Sciatic nerve (tissue), 2 donors: ENCODE measurements at regions of chr3 and their contacts with region 1.

Region 1: GRCh38 chr3:18149386-18149785 is 275.8 kb downstream of the SATB1 start:
- DNase-seq: no peak
- ATAC-seq: no peak

Region 2: GRCh38 chr3:16834212-16834611 is 1315.2 kb before region 1 on chr3:
- intact Hi-C with region 1: loop called (anchors 5 kb)
- DNase-seq: no peak
- ATAC-seq: no peak

Region 3: DNA sequence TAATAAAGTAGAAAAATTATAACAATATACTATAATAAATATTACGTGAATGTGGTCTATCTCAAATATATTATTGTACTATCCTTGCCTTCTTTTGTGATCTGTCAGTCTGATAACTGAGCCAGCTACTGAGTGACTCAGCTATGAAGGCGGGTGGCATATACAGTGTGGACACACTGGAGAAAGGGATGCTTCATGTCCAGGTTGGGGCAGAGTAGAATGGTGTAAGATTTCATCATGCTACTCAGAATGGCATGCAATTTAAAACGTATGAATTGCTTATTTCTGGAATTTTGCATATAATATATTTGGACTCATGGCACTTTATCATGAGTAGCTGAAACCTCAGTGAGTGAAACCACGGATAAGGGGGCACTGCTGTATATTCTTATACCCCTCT is 234.0 kb before region 1 on chr3:
- intact Hi-C with region 1: no loop called
- DNase-seq: no peak
- ATAC-seq: no peak

Region 4: GRCh38 chr3:18179521-18179920 is 30.1 kb after region 1 on chr3:
- intact Hi-C with region 1: no loop called
- DNase-seq: no peak
- ATAC-seq: no peak